Psoas muscle (tissue), 8 donors: ENCODE measurements at regions of chr12 and their contacts with region 1.

Region 1: GRCh38 chr12:3658327-3659163 is 94.4 kb downstream of the CRACR2A start:
- DNase-seq: no peak
- ATAC-seq: peak in 1 of 4 donors; percentile 40
- H3K4me3 ChIP-seq: no peak overlapping the region
- H3K27ac ChIP-seq: no peak overlapping the region
- H3K4me1 ChIP-seq: no peaks in the 10 kb centered on the region
- H3K27me3 ChIP-seq: no peaks in the 10 kb centered on the region
- CTCF ChIP-seq: no peak

Region 2: GRCh38 chr12:2988494-2988893 is 670.1 kb before region 1 on chr12:
- intact Hi-C with region 1: no loop called
- DNase-seq: no peak
- ATAC-seq: no peak
- H3K4me3 ChIP-seq: no peak overlapping the region
- H3K27ac ChIP-seq: no peak overlapping the region
- H3K4me1 ChIP-seq: peaks cover 36% of the 10 kb centered on the region
- H3K27me3 ChIP-seq: no peaks in the 10 kb centered on the region
- CTCF ChIP-seq: no peak

Region 3: DNA sequence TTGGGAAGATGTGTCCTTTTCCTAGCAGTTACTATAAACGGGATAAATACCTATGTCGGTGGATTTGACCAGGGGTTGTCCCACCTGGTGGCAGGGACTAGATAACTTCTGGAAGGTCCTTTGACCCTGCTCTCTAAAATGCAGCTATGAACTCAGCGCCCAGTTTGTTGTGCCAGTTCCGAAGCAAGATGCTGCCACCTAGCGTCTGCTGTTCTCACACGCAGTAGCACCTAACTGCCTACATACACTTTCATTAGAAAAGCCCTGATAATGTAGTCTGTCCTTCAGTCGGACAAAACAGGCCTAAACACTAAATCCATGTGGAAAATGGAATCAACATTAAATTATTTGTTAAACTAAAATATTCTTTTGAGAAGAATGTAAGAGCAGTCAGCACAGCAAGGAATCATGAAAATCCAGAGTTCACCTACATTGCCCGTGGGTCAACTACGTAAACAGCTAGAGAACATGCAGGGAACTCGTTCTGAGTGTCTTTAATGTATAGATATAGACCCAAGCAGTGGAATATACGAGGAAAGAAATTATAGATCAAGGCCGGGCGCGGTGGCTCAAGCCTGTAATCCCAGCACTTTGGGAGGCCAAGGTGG is 145.4 kb after region 1 on chr12:
- intact Hi-C with region 1: loop called in 1 of 2 experiments (anchors 10 kb)
- DNase-seq: peak; percentile 66 to 79
- ATAC-seq: peak; percentile 75 to 92 (median 84)
- H3K4me3 ChIP-seq: no peak overlapping the region
- H3K27ac ChIP-seq: no peak overlapping the region
- H3K4me1 ChIP-seq: no peaks in the 10 kb centered on the region
- H3K27me3 ChIP-seq: no peaks in the 10 kb centered on the region
- CTCF ChIP-seq: peak; percentile 82

Region 4: DNA sequence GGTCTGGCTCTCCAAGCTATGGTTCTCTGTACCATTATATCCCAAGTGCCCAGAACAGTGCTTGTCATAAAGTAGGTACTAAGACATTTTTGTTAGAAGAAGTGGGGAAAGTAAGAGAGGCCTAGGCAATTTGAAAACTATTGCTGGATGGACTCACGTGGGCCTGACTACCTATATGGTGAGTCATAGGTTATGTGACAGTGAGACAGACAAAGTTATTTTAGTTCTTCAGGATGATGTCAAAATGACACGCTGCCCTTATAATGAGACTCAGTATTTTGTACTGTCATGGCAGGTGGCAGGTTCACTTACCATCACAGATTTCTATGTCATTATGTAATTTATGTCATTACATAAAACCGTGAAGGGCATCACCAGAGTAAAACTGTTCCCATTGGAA is 161.6 kb after region 1 on chr12:
- intact Hi-C with region 1: no loop called
- DNase-seq: no peak
- ATAC-seq: peak; percentile 71 to 89 (median 78)
- H3K4me3 ChIP-seq: no peak overlapping the region
- H3K27ac ChIP-seq: no peak overlapping the region
- H3K4me1 ChIP-seq: no peaks in the 10 kb centered on the region
- H3K27me3 ChIP-seq: no peaks in the 10 kb centered on the region
- CTCF ChIP-seq: no peak

Region 5: DNA sequence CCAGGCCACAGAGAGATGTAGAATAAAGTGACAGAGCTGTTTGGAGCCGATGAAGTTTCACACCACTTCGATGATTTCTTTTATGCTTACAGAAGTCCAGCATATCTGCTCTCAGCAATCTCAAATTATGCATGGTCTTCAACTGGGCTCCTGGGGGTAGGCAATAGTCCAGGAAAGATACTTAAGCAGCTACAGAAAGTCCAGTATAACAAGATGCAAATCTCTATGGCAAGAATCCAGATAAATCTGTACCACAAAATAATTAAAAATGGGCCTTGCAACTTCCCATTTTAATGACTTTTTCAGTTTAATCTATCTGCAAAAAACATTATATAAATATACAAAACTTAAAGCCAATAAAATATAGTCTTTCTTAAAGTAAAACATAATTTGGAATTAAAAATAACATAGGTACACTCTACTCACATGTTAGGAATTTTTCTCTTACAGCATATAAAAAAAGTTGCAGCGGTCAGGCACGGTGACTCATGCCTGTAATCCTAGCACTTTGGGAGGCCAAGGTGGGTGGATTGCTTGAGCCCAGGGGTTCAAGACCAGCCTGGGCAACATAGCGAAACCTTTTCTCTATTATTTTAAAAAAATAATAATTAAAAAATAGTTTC is 859.7 kb after region 1 on chr12:
- intact Hi-C with region 1: no loop called
- DNase-seq: no peak
- ATAC-seq: peak in 1 of 4 donors; percentile 58
- H3K4me3 ChIP-seq: no peak overlapping the region
- H3K27ac ChIP-seq: no peak overlapping the region
- H3K4me1 ChIP-seq: peaks cover 3% of the 10 kb centered on the region
- H3K27me3 ChIP-seq: no peaks in the 10 kb centered on the region
- CTCF ChIP-seq: no peak

Region 6: DNA sequence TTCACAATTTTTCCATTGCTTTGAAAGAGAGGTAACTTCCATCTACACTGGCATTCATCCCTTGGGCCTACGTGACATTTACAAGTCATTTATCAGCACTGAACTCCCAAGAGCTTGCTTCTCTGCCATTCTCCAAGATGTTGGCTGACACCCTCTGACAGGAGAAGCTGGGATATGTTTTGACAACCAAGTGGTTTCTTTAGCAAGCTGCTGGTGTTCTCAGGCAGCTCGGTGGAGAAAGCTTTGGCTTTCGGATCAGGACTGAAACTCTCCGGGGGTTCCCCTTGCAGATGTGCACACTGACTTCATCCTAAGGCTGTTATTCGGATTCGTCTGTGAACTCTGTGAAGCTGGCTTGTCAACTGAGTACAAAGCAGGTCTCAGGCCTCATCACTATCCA is 1400.8 kb after region 1 on chr12:
- intact Hi-C with region 1: no loop called
- DNase-seq: no peak
- ATAC-seq: no peak
- H3K4me3 ChIP-seq: no peak overlapping the region
- H3K27ac ChIP-seq: no peak overlapping the region
- H3K4me1 ChIP-seq: no peaks in the 10 kb centered on the region
- H3K27me3 ChIP-seq: peaks cover 0 to 1% (median 0%) of the 10 kb centered on the region in 3 donors
- CTCF ChIP-seq: no peak